ENCODE measurements at regions of chr5 and their contacts with region 1.

Region 1: DNA sequence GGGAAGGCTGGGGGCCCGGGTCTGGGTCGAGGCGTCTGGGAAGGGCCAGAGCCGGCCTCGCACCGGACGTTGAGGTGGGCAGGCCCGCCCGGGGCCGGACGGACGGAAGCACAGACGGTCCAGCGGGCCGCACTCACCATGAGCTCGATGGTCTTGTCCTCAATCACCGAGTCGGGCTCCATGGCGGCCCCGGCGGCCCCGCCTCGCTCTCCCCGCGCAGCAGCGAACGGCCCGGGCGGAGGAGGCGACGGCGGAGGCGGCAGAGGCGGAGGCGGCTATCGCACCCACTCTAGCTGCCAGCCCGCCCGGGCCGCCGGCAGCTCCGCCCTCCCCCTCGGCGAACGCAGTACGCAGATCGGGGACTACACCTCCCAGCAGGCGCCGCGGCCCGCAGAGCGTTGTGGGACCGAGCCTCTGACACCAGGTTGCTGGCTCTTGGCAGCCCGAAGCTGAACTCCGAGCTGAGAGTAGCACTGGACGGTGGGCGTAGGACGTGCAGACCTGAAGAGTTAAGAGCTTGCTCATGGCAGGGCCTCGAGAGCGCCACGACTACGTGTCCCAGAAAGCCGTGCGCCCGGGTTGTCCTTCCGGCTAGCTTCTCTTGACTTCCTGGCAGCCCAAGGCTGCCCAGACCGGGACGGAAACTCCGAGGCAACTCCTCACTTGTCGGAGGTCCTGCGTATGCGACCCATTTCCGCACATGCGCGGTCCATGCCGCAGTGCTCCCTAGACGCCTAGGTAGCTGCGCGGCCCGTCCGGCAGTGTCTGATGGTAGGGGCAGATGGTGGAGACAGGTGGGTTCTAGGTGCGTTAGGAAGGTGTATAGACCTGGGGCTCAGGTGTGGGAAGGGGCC is at the start of gene FBXW11:
- DNase-seq: peak; percentile 93 to 98 (median 94)
- H3K4me3 ChIP-seq: peak within 1 kb of the TSS; percentile 93 to 97
- H3K4me3 Mint-ChIP-seq: peak within 1 kb of the TSS; percentile 91 to 99 (median 97)
- H3K27ac ChIP-seq: peak within 1 kb of the TSS; percentile 93
- H3K27ac Mint-ChIP-seq: peak within 1 kb of the TSS; percentile 93 to 99 (median 98)
- H3K4me1 ChIP-seq: peaks cover 53% of the 10 kb centered on the region
- H3K4me1 Mint-ChIP-seq: peaks cover 32 to 56% (median 46%) of the 10 kb centered on the region in 4 donors
- H3K27me3 ChIP-seq: no peaks in the 10 kb centered on the region
- H3K27me3 Mint-ChIP-seq: no peaks in the 10 kb centered on the region
- total RNA-seq, gene FBXW11: 41.7 to 43.4 TPM

Region 2: GRCh38 chr5:171387345-171387969 is 619.1 kb before region 1 on chr5 and contains the start of gene NPM1:
- CTCF ChIA-PET with region 1: no interaction called
- POLR2A ChIA-PET with region 1: interaction called, 27 read pairs
- intact Hi-C with region 1: loop called (anchors 1 kb)
- DNase-seq: peak; percentile 97 to 99 (median 99)
- H3K4me3 ChIP-seq: peak within 1 kb of the TSS; percentile 74 to 94
- H3K4me3 Mint-ChIP-seq: peak within 1 kb of the TSS; percentile 97 to 99 (median 98)
- H3K27ac ChIP-seq: peak within 1 kb of the TSS; percentile 79
- H3K27ac Mint-ChIP-seq: peak within 1 kb of the TSS; percentile 95 to 100 (median 99)
- H3K4me1 ChIP-seq: peaks cover 45% of the 10 kb centered on the region
- H3K4me1 Mint-ChIP-seq: peaks cover 29 to 58% (median 43%) of the 10 kb centered on the region in 4 donors
- H3K27me3 ChIP-seq: no peaks in the 10 kb centered on the region
- H3K27me3 Mint-ChIP-seq: peaks cover 0 to 3% of the 10 kb centered on the region in 2 donors
- total RNA-seq, gene NPM1: 857 to 892 TPM

Region 3: DNA sequence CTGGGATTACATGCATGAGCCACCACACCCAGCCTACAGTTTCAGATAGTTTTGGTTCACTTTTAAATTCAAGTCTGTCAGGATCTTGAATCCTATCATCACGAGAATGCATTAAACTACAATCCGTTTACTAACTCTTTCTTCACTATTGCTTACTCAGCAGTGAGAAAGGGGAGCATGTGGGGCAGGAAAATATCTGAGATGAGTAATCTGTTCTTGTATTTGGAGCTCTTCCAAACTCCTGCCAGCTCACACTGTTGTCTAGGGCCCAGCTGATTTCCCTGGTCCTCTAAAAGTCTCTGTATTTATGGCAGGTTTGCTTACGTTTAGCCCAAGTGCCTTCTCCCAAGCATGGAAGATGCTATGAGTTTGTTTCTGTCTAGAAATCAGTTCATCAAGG is 434.9 kb before region 1 on chr5:
- CTCF ChIA-PET with region 1: no interaction called
- POLR2A ChIA-PET with region 1: no interaction called
- intact Hi-C with region 1: no loop called
- DNase-seq: no peak
- H3K4me3 ChIP-seq: no peak overlapping the region
- H3K4me3 Mint-ChIP-seq: no peak overlapping the region
- H3K27ac ChIP-seq: no peak overlapping the region
- H3K27ac Mint-ChIP-seq: no peak overlapping the region
- H3K4me1 ChIP-seq: no peaks in the 10 kb centered on the region
- H3K4me1 Mint-ChIP-seq: no peaks in the 10 kb centered on the region
- H3K27me3 ChIP-seq: no peaks in the 10 kb centered on the region
- H3K27me3 Mint-ChIP-seq: peaks cover 6 to 11% of the 10 kb centered on the region in 2 donors

Region 4: GRCh38 chr5:171913987-171914273 is 92.6 kb before region 1 on chr5:
- CTCF ChIA-PET with region 1: interaction called, 36 read pairs
- POLR2A ChIA-PET with region 1: interaction called, 11 read pairs
- intact Hi-C with region 1: no loop called
- DNase-seq: no peak
- H3K4me3 ChIP-seq: no peak overlapping the region
- H3K4me3 Mint-ChIP-seq: peak overlapping the region in 2 of 8 donors; percentile 10 to 41
- H3K27ac ChIP-seq: no peak overlapping the region
- H3K27ac Mint-ChIP-seq: peak overlapping the region in 5 of 7 donors; percentile 2 to 88 (median 60)
- H3K4me1 ChIP-seq: peaks cover 24% of the 10 kb centered on the region
- H3K4me1 Mint-ChIP-seq: peaks cover 34 to 57% (median 41%) of the 10 kb centered on the region in 4 donors
- H3K27me3 ChIP-seq: no peaks in the 10 kb centered on the region
- H3K27me3 Mint-ChIP-seq: no peaks in the 10 kb centered on the region

Region 5: DNA sequence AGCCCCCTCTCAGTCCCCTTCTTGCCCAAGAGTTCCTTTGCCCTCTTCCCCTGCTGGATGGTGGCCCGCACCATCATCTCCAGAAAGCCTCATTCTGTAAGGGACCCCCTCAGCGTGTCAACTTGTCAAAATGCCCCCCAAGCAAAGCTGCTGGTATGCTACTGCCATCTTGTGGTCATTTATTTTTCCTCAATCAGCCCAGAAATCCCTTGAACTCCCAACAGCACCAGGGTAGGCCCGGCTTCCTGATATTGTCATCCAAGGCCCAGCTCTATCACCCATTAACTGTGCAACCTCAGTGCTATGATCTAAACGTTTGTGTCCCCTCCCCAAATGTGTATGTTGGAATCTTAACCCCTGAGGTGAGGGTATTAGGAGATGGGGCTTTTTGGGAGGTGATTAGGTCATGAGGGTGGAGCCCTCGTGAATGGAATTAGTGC is 53.1 kb after region 1 on chr5:
- CTCF ChIA-PET with region 1: interaction called, 26 read pairs
- POLR2A ChIA-PET with region 1: interaction called, 44 read pairs
- intact Hi-C with region 1: no loop called
- DNase-seq: peak in 1 of 5 donors; percentile 25
- H3K4me3 ChIP-seq: no peak overlapping the region
- H3K4me3 Mint-ChIP-seq: no peak overlapping the region
- H3K27ac ChIP-seq: no peak overlapping the region
- H3K27ac Mint-ChIP-seq: peak overlapping the region; percentile 6 to 89 (median 73)
- H3K4me1 ChIP-seq: peaks cover 11% of the 10 kb centered on the region
- H3K4me1 Mint-ChIP-seq: peaks cover 13 to 30% (median 17%) of the 10 kb centered on the region in 4 donors
- H3K27me3 ChIP-seq: no peaks in the 10 kb centered on the region
- H3K27me3 Mint-ChIP-seq: no peaks in the 10 kb centered on the region

Region 6: GRCh38 chr5:172071289-172071875 is 64.8 kb after region 1 on chr5:
- CTCF ChIA-PET with region 1: interaction called, 4 read pairs
- POLR2A ChIA-PET with region 1: interaction called, 44 read pairs
- intact Hi-C with region 1: loop called (anchors 1 kb)
- DNase-seq: no peak
- H3K4me3 ChIP-seq: no peak overlapping the region
- H3K4me3 Mint-ChIP-seq: peak overlapping the region in 6 of 8 donors; percentile 8 to 62 (median 32)
- H3K27ac ChIP-seq: no peak overlapping the region
- H3K27ac Mint-ChIP-seq: peak overlapping the region; percentile 1 to 95 (median 29)
- H3K4me1 ChIP-seq: peaks cover 60% of the 10 kb centered on the region
- H3K4me1 Mint-ChIP-seq: peaks cover 39 to 65% (median 50%) of the 10 kb centered on the region in 4 donors
- H3K27me3 ChIP-seq: no peaks in the 10 kb centered on the region
- H3K27me3 Mint-ChIP-seq: no peaks in the 10 kb centered on the region

Region 7: GRCh38 chr5:172283020-172283861 is 276.7 kb after region 1 on chr5 and contains the start of gene UBTD2:
- CTCF ChIA-PET with region 1: interaction called, 9 read pairs
- POLR2A ChIA-PET with region 1: interaction called, 8 read pairs
- intact Hi-C with region 1: loop called (anchors 1 kb)
- DNase-seq: peak; percentile 72 to 82 (median 76)
- H3K4me3 ChIP-seq: peak within 1 kb of the TSS; percentile 47 to 71
- H3K4me3 Mint-ChIP-seq: peak within 1 kb of the TSS; percentile 89 to 93 (median 91)
- H3K27ac ChIP-seq: peak within 1 kb of the TSS; percentile 62
- H3K27ac Mint-ChIP-seq: peak within 1 kb of the TSS; percentile 80 to 96 (median 87)
- H3K4me1 ChIP-seq: peaks cover 26% of the 10 kb centered on the region
- H3K4me1 Mint-ChIP-seq: peaks cover 14 to 34% (median 21%) of the 10 kb centered on the region in 4 donors
- H3K27me3 ChIP-seq: no peaks in the 10 kb centered on the region
- H3K27me3 Mint-ChIP-seq: no peaks in the 10 kb centered on the region
- total RNA-seq, gene UBTD2: 6.3 TPM

Region 8: DNA sequence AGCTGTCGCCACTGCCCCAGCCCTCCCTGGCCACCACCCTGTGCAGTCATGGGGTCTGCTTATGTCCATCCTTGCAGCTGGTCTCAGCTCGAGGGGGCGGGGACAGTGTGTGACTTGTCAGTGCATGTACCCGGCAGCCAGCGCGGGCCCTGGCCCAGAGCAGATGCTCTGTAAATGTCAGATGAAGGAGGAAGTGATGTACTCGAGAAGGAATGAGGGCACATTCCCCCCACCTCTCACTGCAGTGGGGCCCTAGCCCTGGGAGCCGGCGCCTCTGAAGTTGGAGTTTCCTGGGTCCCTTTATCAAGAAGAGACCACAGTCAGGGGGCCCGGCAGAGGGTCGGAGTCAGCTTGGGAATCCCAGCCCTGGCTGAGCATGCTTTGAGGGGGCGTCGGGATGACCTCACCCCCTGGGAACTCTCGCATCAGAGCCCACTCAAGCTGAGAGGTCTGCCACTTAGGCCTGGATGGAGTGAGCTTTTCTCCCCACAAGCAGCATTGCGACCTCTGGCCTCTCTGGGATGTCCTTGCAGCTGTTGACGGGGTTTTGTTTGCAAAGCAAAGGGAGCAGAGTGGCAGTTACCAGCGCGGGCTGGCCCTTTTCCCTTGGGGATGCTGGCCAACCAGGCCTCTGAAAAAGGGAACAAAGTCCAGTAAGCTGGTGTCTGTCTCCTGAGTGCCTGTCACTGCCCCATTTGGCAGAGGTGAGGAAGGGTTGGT is 653.5 kb after region 1 on chr5:
- CTCF ChIA-PET with region 1: no interaction called
- POLR2A ChIA-PET with region 1: no interaction called
- intact Hi-C with region 1: no loop called
- DNase-seq: no peak
- H3K4me3 ChIP-seq: no peak overlapping the region
- H3K4me3 Mint-ChIP-seq: no peak overlapping the region
- H3K27ac ChIP-seq: no peak overlapping the region
- H3K27ac Mint-ChIP-seq: no peak overlapping the region
- H3K4me1 ChIP-seq: no peaks in the 10 kb centered on the region
- H3K4me1 Mint-ChIP-seq: no peaks in the 10 kb centered on the region
- H3K27me3 ChIP-seq: no peaks in the 10 kb centered on the region
- H3K27me3 Mint-ChIP-seq: peaks cover 0 to 7% of the 10 kb centered on the region in 2 donors